ENCODE measurements at regions of chr11 and their contacts with region 1.

Region 1: DNA sequence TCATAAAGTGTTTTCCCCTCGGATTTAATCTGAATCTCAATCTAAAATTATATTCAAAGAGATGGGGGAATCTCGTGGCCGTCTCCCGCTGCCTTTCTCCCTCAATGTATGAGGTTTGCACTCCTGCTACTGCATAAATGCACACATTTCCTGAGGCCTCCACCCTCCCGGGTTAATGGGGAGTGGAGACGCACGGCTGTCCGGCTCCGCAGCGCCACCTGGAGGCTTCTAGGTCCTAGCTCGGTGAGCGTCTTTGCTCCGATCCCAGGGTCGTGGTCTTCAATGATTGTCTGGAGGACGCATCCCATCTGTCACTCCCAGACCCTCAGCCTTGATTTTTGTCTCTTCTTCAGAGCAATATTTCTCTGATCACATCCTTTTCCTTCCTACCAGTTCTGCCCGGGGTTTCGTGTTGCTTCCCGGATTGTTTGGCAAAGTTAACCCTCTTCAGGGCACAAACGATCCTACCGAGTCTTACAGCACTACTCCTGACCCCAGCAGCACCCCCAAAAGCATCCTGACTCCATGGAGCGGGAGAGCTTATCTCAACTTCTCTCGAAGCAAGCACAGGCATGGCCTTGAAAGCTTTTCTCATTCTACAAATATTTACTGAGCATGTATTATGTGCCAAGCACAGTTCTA is at the start of gene LMO1:
- DNase-seq: peak; percentile 91
- ATAC-seq: peak; percentile 53
- H3K4me3 Mint-ChIP-seq: peak within 1 kb of the TSS; percentile 71
- H3K27ac Mint-ChIP-seq: no peak within 1 kb of the TSS
- H3K4me1 Mint-ChIP-seq: peaks cover 16% of the 10 kb centered on the region
- H3K27me3 Mint-ChIP-seq: peaks cover 86% of the 10 kb centered on the region
- CTCF ChIP-seq: peak; percentile 76
- total RNA-seq, gene LMO1: 0.39 to 0.44 TPM (median 0.44 TPM) in 3 replicates

Region 2: GRCh38 chr11:8192016-8192895 is 71.6 kb before region 1 on chr11:
- CTCF ChIA-PET with region 1: interaction called, 29 read pairs
- POLR2A ChIA-PET with region 1: no interaction called
- DNase-seq: peak; percentile 84
- ATAC-seq: peak; percentile 93
- H3K4me3 Mint-ChIP-seq: no peak overlapping the region
- H3K27ac Mint-ChIP-seq: no peak overlapping the region
- H3K4me1 Mint-ChIP-seq: no peaks in the 10 kb centered on the region
- H3K27me3 Mint-ChIP-seq: peaks cover 26% of the 10 kb centered on the region
- CTCF ChIP-seq: peak; percentile 70

Region 3: DNA sequence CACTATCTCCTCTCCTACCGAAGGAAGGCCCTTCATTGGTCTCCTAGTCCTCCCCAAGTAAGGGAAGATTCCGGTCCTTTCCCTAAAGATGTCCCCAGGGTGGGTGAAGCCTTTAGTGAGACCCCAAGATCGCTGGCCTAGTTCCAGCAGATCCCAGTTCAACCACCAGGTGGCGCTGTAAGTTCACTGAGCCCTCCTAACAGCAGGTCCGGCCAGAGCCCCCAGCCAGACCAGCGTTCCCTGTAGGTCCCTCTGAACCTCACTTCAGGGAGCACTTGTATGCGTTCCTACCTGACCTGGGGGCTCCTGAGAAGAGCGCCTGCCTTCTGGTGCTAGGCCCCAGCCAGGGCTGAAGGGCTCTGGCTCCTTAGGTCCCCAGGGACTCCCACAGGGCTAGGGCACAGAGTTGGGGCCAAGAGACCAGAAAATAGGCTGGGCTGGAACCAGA is 38.3 kb before region 1 on chr11:
- CTCF ChIA-PET with region 1: interaction called, 105 read pairs
- POLR2A ChIA-PET with region 1: no interaction called
- DNase-seq: peak; percentile 96
- ATAC-seq: peak; percentile 84
- H3K4me3 Mint-ChIP-seq: no peak overlapping the region
- H3K27ac Mint-ChIP-seq: no peak overlapping the region
- H3K4me1 Mint-ChIP-seq: peaks cover 16% of the 10 kb centered on the region
- H3K27me3 Mint-ChIP-seq: peaks cover 3% of the 10 kb centered on the region; the same call in 1 of the 2 replicates
- CTCF ChIP-seq: peak; percentile 98

Region 4: DNA sequence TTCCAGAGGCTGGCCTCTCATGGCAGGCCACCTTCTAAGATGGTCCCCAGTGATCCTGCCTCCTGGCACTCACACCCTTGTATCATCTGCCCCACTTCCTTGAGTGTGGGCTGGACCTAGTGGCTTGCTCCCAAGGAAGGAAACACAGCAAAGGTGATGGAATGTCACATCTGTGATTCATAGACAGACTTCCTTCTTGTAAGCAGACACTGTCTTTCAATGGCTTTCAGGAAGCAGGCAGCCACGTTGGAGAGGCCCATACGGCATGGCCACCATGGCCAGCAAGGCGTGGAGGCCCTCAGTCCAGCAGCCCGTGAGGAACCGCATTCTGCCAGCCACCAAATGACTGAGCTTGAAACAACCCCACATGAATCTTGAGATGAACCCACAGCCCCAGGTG is 11.5 kb before region 1 on chr11:
- CTCF ChIA-PET with region 1: interaction called, 57 read pairs
- POLR2A ChIA-PET with region 1: no interaction called
- DNase-seq: no peak
- ATAC-seq: no peak
- H3K4me3 Mint-ChIP-seq: no peak overlapping the region
- H3K27ac Mint-ChIP-seq: no peak overlapping the region
- H3K4me1 Mint-ChIP-seq: no peaks in the 10 kb centered on the region
- H3K27me3 Mint-ChIP-seq: no peaks in the 10 kb centered on the region
- CTCF ChIP-seq: no peak

Region 5: DNA sequence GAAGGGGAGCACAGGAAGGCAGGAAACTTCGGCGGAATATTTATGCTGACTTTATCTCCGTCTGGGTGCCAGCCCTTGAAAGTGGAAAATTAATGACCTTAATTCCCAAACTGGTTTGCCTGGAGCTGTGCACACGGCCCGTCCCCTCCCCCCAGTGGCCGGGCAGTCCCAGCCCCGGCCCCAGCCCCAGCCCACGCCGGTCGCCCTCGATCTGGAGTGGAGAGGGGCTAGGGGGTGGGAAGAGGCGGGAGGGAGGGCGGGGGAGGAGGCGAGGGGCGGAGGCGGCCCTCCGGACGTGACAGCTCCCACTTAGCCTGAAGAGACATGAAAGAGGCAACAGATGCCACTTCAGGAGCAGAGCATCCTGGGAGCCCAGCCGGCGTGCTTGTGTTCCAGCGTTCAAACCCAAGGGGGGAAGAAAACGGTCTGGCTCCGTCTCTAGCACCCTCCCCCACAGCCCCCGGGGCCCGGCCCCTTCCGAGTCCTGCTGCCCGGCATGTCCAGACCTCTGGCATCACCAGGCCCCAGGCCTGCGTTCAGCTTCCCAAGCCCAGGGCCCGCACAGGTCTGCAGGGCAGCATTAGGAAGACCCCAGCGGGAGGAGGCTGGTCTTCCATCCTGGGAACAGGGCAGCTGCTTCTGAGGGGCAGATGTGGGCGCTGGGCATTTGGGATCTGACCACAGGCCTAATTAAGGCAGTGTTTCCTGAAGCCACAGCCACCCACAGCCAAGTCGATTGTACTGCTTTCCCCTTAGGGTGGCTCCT is 19.8 kb after region 1 on chr11:
- CTCF ChIA-PET with region 1: interaction called, 32 read pairs
- POLR2A ChIA-PET with region 1: interaction called, 3 read pairs
- DNase-seq: peak; percentile 54
- ATAC-seq: peak; percentile 73
- H3K4me3 Mint-ChIP-seq: no peak overlapping the region
- H3K27ac Mint-ChIP-seq: no peak overlapping the region
- H3K4me1 Mint-ChIP-seq: no peaks in the 10 kb centered on the region; the same call in none of the 2 replicates
- H3K27me3 Mint-ChIP-seq: peaks cover 17% of the 10 kb centered on the region
- CTCF ChIP-seq: no peak

Region 6: GRCh38 chr11:8318336-8318935 is 54.5 kb after region 1 on chr11:
- CTCF ChIA-PET with region 1: interaction called, 59 read pairs
- POLR2A ChIA-PET with region 1: no interaction called
- DNase-seq: peak; percentile 81
- ATAC-seq: peak; percentile 97
- H3K4me3 Mint-ChIP-seq: no peak overlapping the region
- H3K27ac Mint-ChIP-seq: no peak overlapping the region
- H3K4me1 Mint-ChIP-seq: peaks cover 2% of the 10 kb centered on the region; the same call in 1 of the 2 replicates
- H3K27me3 Mint-ChIP-seq: peaks cover 7% of the 10 kb centered on the region
- CTCF ChIP-seq: peak; percentile 84

Region 7: GRCh38 chr11:8339592-8340022 is 75.7 kb after region 1 on chr11:
- CTCF ChIA-PET with region 1: interaction called, 11 read pairs
- POLR2A ChIA-PET with region 1: no interaction called
- DNase-seq: peak; percentile 62
- ATAC-seq: peak; percentile 67
- H3K4me3 Mint-ChIP-seq: peak overlapping the region; percentile 61
- H3K27ac Mint-ChIP-seq: no peak overlapping the region
- H3K4me1 Mint-ChIP-seq: peaks cover 38% of the 10 kb centered on the region
- H3K27me3 Mint-ChIP-seq: no peaks in the 10 kb centered on the region
- CTCF ChIP-seq: no peak

Measured in WTC11 (cell line).